Calu3 (cell line): ENCODE measurements at regions of chr3 and their contacts with region 1.

Region 1: DNA sequence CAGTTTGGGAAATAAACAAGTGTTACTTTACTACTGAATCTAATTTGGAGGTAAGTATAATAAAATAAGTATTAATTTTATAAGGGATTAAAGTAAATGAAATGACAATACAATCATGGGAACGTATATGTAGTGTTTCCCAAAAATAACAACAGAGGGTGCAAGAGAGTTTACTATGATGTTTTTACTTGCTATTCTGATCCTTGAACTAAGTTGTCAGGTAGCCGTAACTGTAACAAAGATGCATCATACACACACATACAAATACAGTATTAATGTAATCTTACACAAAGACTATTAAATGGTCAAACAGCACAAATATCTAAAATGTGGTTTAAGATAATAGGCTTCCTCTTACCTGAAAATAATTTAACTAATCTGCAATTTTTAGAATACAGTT is 311.4 kb downstream of the TBC1D5 start:
- DNase-seq: no peak
- H3K4me3 Mint-ChIP-seq: no peak overlapping the region
- H3K27ac Mint-ChIP-seq: no peak overlapping the region
- H3K4me1 Mint-ChIP-seq: no peaks in the 10 kb centered on the region
- H3K27me3 Mint-ChIP-seq: no peaks in the 10 kb centered on the region
- CTCF ChIP-seq: peak; percentile 18

Region 2: GRCh38 chr3:17639765-17640164 is 208.8 kb after region 1 on chr3:
- CTCF ChIA-PET with region 1: no interaction called
- intact Hi-C with region 1: loop called (anchors 5 kb)
- DNase-seq: peak; percentile 17
- H3K4me3 Mint-ChIP-seq: no peak overlapping the region
- H3K27ac Mint-ChIP-seq: peak overlapping the region; percentile 27
- H3K4me1 Mint-ChIP-seq: peaks cover 21% of the 10 kb centered on the region
- H3K27me3 Mint-ChIP-seq: no peaks in the 10 kb centered on the region
- CTCF ChIP-seq: no peak

Region 3: DNA sequence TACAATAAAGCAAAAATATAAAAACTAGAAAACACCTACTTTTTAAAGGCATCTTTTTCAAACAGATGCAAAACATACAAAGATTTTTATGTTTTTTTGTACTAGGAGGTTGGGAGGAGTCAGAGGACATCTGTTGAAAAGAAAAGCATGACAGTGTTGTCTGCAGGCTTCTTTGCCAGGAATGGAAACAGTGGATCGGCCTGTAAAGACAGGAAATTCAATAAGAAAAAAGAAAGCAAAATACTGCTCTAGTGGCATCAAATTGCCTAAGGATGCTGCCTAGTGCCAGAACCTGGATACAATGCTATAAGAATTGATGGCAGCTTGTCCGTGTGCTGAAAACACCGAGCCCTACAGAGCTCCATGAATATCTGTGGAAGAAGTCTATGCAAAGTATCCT is 241.5 kb after region 1 on chr3:
- CTCF ChIA-PET with region 1: no interaction called
- intact Hi-C with region 1: no loop called
- DNase-seq: no peak
- H3K4me3 Mint-ChIP-seq: no peak overlapping the region
- H3K27ac Mint-ChIP-seq: no peak overlapping the region
- H3K4me1 Mint-ChIP-seq: no peaks in the 10 kb centered on the region
- H3K27me3 Mint-ChIP-seq: no peaks in the 10 kb centered on the region
- CTCF ChIP-seq: no peak

Region 4: GRCh38 chr3:17686613-17687012 is 255.6 kb after region 1 on chr3:
- CTCF ChIA-PET with region 1: no interaction called
- intact Hi-C with region 1: loop called (anchors 5 kb)
- DNase-seq: no peak
- H3K4me3 Mint-ChIP-seq: no peak overlapping the region
- H3K27ac Mint-ChIP-seq: no peak overlapping the region
- H3K4me1 Mint-ChIP-seq: no peaks in the 10 kb centered on the region
- H3K27me3 Mint-ChIP-seq: no peaks in the 10 kb centered on the region
- CTCF ChIP-seq: no peak

Region 5: GRCh38 chr3:17930661-17931060 is 499.7 kb after region 1 on chr3:
- CTCF ChIA-PET with region 1: no interaction called
- intact Hi-C with region 1: no loop called
- DNase-seq: no peak
- H3K4me3 Mint-ChIP-seq: no peak overlapping the region
- H3K27ac Mint-ChIP-seq: no peak overlapping the region
- H3K4me1 Mint-ChIP-seq: no peaks in the 10 kb centered on the region
- H3K27me3 Mint-ChIP-seq: no peaks in the 10 kb centered on the region
- CTCF ChIP-seq: no peak